GM12878 (cell line): ENCODE measurements at regions of chr2 and their contacts with region 1.

Region 1: GRCh38 chr2:109545828-109546713 is 67.7 kb downstream of the SEPTIN10 start:
- DNase-seq: peak; percentile 39
- ATAC-seq: peak; percentile 97
- H3K4me3 ChIP-seq: no peak overlapping the region
- H3K27ac ChIP-seq: no peak overlapping the region
- H3K4me1 ChIP-seq: no peaks in the 10 kb centered on the region; the same call in 1 of the 2 replicates
- H3K27me3 ChIP-seq: no peaks in the 10 kb centered on the region; a peak in 1 of 4 replicates
- CTCF ChIP-seq: peak; percentile 83 to 97 (median 95)
- EP300 ChIP-seq: no peak
- POLR2A ChIP-seq: no peak
- RAD21 ChIP-seq: peak; percentile 98

Region 2: DNA sequence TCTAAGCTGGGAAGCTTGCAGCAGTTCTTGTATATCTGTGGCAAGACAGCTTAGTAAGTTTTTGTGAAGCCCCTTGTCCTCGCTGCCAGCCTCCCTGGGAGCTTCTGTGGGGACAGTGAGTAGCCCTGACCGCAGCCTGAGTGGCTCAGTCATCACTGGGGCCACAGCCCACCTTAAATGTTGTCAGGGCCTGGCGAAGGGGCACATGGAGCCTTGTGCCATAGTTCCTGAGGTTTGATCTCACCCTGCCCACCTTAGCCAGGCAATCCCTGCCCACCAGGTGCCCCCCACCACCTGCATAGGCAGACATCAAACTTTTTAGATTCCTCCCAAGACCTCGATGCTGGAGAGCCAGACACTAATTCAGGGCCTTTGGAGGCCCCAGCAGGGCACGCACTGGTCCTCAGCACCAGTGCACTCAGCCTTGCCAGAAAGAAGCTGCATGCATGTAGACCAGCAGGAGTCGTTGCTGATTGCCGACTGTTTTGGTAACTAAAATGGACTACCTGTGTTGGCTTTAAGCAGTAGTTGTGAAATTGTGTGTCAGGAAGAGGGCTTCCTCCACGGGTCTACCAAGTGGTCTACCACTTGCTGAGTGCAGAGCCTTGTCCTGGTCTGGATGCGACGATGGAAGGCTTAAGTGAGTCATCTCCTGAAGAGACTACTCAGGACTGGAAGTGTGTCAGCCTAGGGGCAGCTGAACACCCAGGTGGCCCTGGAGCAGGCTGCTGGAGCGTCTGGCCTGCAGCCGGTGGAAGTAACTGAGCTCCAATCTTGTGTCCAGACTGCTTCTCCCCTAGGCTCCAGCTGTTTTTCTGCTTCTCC is 165.4 kb before region 1 on chr2:
- CTCF ChIA-PET with region 1: no interaction called
- POLR2A ChIA-PET with region 1: no interaction called
- RAD21 ChIA-PET with region 1: no interaction called
- SMC1A ChIA-PET with region 1: no interaction called
- in situ Hi-C with region 1: no loop called
- intact Hi-C with region 1: no loop called
- DNase-seq: no peak
- ATAC-seq: no peak
- H3K4me3 ChIP-seq: no peak overlapping the region
- H3K27ac ChIP-seq: no peak overlapping the region
- H3K4me1 ChIP-seq: no peaks in the 10 kb centered on the region
- H3K27me3 ChIP-seq: no peaks in the 10 kb centered on the region
- CTCF ChIP-seq: no peak
- EP300 ChIP-seq: no peak
- POLR2A ChIP-seq: no peak
- RAD21 ChIP-seq: no peak

Region 3: GRCh38 chr2:109510136-109511028 is 35.7 kb before region 1 on chr2:
- CTCF ChIA-PET with region 1: interaction called, 32 read pairs
- POLR2A ChIA-PET with region 1: interaction called, 5 read pairs
- RAD21 ChIA-PET with region 1: interaction called, 15 read pairs
- SMC1A ChIA-PET with region 1: interaction called, 12 read pairs
- in situ Hi-C with region 1: no loop called
- intact Hi-C with region 1: no loop called
- DNase-seq: peak; percentile 27
- ATAC-seq: peak; percentile 53
- H3K4me3 ChIP-seq: no peak overlapping the region
- H3K27ac ChIP-seq: no peak overlapping the region
- H3K4me1 ChIP-seq: peaks cover 38% of the 10 kb centered on the region
- H3K27me3 ChIP-seq: no peaks in the 10 kb centered on the region
- CTCF ChIP-seq: peak; percentile 94 to 98 (median 96)
- EP300 ChIP-seq: no peak
- POLR2A ChIP-seq: no peak
- RAD21 ChIP-seq: peak; percentile 92

Region 4: DNA sequence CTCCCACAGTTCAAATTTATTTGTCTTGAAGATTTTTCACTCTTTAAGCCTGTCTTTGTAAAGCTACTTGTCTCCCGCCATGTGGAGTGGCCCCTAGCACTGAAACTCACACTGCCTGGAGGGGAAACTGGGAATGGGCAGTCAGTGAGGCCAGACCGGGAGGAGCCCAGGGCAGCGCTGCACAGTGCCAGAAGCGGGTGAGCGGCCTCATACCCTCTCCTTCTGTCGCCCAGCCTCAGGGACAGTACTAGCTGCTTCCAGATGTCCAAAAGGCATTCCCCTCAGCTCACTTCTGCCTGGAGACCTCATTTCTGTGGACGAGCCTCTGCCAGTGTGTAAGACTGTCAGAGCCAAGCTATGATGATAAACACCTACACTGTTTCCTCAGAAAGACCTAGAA is 12.2 kb before region 1 on chr2:
- CTCF ChIA-PET with region 1: interaction called, 26 read pairs
- POLR2A ChIA-PET with region 1: no interaction called
- RAD21 ChIA-PET with region 1: interaction called, 8 read pairs
- SMC1A ChIA-PET with region 1: interaction called, 7 read pairs
- in situ Hi-C with region 1: no loop called
- intact Hi-C with region 1: no loop called
- DNase-seq: no peak
- ATAC-seq: no peak
- H3K4me3 ChIP-seq: no peak overlapping the region
- H3K27ac ChIP-seq: no peak overlapping the region
- H3K4me1 ChIP-seq: no peaks in the 10 kb centered on the region
- H3K27me3 ChIP-seq: no peaks in the 10 kb centered on the region
- CTCF ChIP-seq: no peak
- EP300 ChIP-seq: no peak
- POLR2A ChIP-seq: no peak
- RAD21 ChIP-seq: no peak

Region 5: GRCh38 chr2:109582928-109583895 is 37.1 kb after region 1 on chr2:
- CTCF ChIA-PET with region 1: interaction called, 11 read pairs
- POLR2A ChIA-PET with region 1: interaction called, 4 read pairs
- RAD21 ChIA-PET with region 1: no interaction called
- SMC1A ChIA-PET with region 1: interaction called, 4 read pairs
- in situ Hi-C with region 1: no loop called
- intact Hi-C with region 1: loop called (anchors 5 kb)
- DNase-seq: peak; percentile 45
- ATAC-seq: peak; percentile 84
- H3K4me3 ChIP-seq: no peak overlapping the region
- H3K27ac ChIP-seq: peak overlapping the region; percentile 50
- H3K4me1 ChIP-seq: peaks cover 27% of the 10 kb centered on the region
- H3K27me3 ChIP-seq: no peaks in the 10 kb centered on the region
- CTCF ChIP-seq: no peak
- EP300 ChIP-seq: peak in 1 of 2 experiments; percentile 46; a peak in 1 of 4 replicates
- POLR2A ChIP-seq: no peak
- RAD21 ChIP-seq: no peak

Region 6: GRCh38 chr2:109637749-109638570 is 91.9 kb after region 1 on chr2:
- CTCF ChIA-PET with region 1: interaction called, 11 read pairs
- POLR2A ChIA-PET with region 1: no interaction called
- RAD21 ChIA-PET with region 1: interaction called, 10 read pairs
- SMC1A ChIA-PET with region 1: interaction called, 8 read pairs
- in situ Hi-C with region 1: no loop called
- intact Hi-C with region 1: no loop called
- DNase-seq: peak; percentile 60
- ATAC-seq: peak; percentile 86
- H3K4me3 ChIP-seq: 0 out of 2 replicates have a peak overlapping the region, but pooled peaks have one; percentile 29
- H3K27ac ChIP-seq: peak overlapping the region; percentile 91
- H3K4me1 ChIP-seq: peaks cover 32% of the 10 kb centered on the region
- H3K27me3 ChIP-seq: no peaks in the 10 kb centered on the region
- CTCF ChIP-seq: no peak
- EP300 ChIP-seq: peak; percentile 39 to 55; a peak in 2 of 4 replicates
- POLR2A ChIP-seq: no peak
- RAD21 ChIP-seq: no peak

Region 7: GRCh38 chr2:109674894-109675534 is 128.9 kb after region 1 on chr2:
- CTCF ChIA-PET with region 1: interaction called, 12 read pairs
- POLR2A ChIA-PET with region 1: no interaction called
- RAD21 ChIA-PET with region 1: interaction called, 3 read pairs
- SMC1A ChIA-PET with region 1: interaction called, 5 read pairs
- in situ Hi-C with region 1: no loop called
- intact Hi-C with region 1: no loop called
- DNase-seq: no peak
- ATAC-seq: no peak
- H3K4me3 ChIP-seq: no peak overlapping the region
- H3K27ac ChIP-seq: no peak overlapping the region
- H3K4me1 ChIP-seq: no peaks in the 10 kb centered on the region
- H3K27me3 ChIP-seq: no peaks in the 10 kb centered on the region; a peak in 1 of 4 replicates
- CTCF ChIP-seq: no peak
- EP300 ChIP-seq: no peak
- POLR2A ChIP-seq: no peak
- RAD21 ChIP-seq: no peak